B cell (primary cell): ENCODE measurements at regions of chr17 and their contacts with region 1.

Region 1: GRCh38 chr17:28726226-28727130 is at the start of gene TLCD1:
- DNase-seq: peak; percentile 93
- ATAC-seq: peak; percentile 46
- H3K4me3 ChIP-seq: peak within 1 kb of the TSS; percentile 40 to 77 (median 66)
- H3K4me3 Mint-ChIP-seq: peak within 1 kb of the TSS; percentile 98
- H3K27ac ChIP-seq: peak within 1 kb of the TSS; percentile 90 to 97
- H3K27ac Mint-ChIP-seq: peak within 1 kb of the TSS; percentile 100
- H3K4me1 ChIP-seq: peaks cover 38 to 65% of the 10 kb centered on the region in 2 donors
- H3K4me1 Mint-ChIP-seq: peaks cover 67% of the 10 kb centered on the region
- H3K27me3 ChIP-seq: no peaks in the 10 kb centered on the region
- H3K27me3 Mint-ChIP-seq: no peaks in the 10 kb centered on the region
- CTCF ChIP-seq: peak; percentile 99
- total RNA-seq, gene TLCD1: 3.1 and 3.4 TPM in 2 replicates

Region 2: GRCh38 chr17:28033972-28034714 is 692.3 kb before region 1 on chr17:
- CTCF ChIA-PET with region 1: no interaction called
- POLR2A ChIA-PET with region 1: no interaction called
- intact Hi-C with region 1: no loop called
- DNase-seq: no peak
- ATAC-seq: no peak
- H3K4me3 ChIP-seq: no peak overlapping the region
- H3K4me3 Mint-ChIP-seq: no peak overlapping the region
- H3K27ac ChIP-seq: no peak overlapping the region
- H3K27ac Mint-ChIP-seq: no peak overlapping the region
- H3K4me1 ChIP-seq: no peaks in the 10 kb centered on the region
- H3K4me1 Mint-ChIP-seq: no peaks in the 10 kb centered on the region
- H3K27me3 ChIP-seq: no peaks in the 10 kb centered on the region
- H3K27me3 Mint-ChIP-seq: no peaks in the 10 kb centered on the region
- CTCF ChIP-seq: no peak

Region 3: GRCh38 chr17:28509789-28510188 is 216.7 kb before region 1 on chr17:
- CTCF ChIA-PET with region 1: no interaction called
- POLR2A ChIA-PET with region 1: no interaction called
- intact Hi-C with region 1: no loop called
- DNase-seq: no peak
- ATAC-seq: no peak
- H3K4me3 ChIP-seq: no peak overlapping the region
- H3K4me3 Mint-ChIP-seq: no peak overlapping the region
- H3K27ac ChIP-seq: no peak overlapping the region
- H3K27ac Mint-ChIP-seq: no peak overlapping the region
- H3K4me1 ChIP-seq: no peaks in the 10 kb centered on the region
- H3K4me1 Mint-ChIP-seq: no peaks in the 10 kb centered on the region
- H3K27me3 ChIP-seq: peaks cover 0 to 28% (median 5%) of the 10 kb centered on the region in 4 experiments
- H3K27me3 Mint-ChIP-seq: peaks cover 33% of the 10 kb centered on the region
- CTCF ChIP-seq: no peak

Region 4: GRCh38 chr17:28698253-28698941 is 28.1 kb before region 1 on chr17:
- CTCF ChIA-PET with region 1: no interaction called
- POLR2A ChIA-PET with region 1: no interaction called
- intact Hi-C with region 1: no loop called
- DNase-seq: no peak
- ATAC-seq: no peak
- H3K4me3 ChIP-seq: no peak overlapping the region
- H3K4me3 Mint-ChIP-seq: no peak overlapping the region
- H3K27ac ChIP-seq: no peak overlapping the region
- H3K27ac Mint-ChIP-seq: peak overlapping the region; percentile 23
- H3K4me1 ChIP-seq: no peaks in the 10 kb centered on the region
- H3K4me1 Mint-ChIP-seq: no peaks in the 10 kb centered on the region
- H3K27me3 ChIP-seq: no peaks in the 10 kb centered on the region
- H3K27me3 Mint-ChIP-seq: no peaks in the 10 kb centered on the region
- CTCF ChIP-seq: no peak

Region 5: GRCh38 chr17:28710861-28711722 is 15.4 kb before region 1 on chr17:
- CTCF ChIA-PET with region 1: interaction called, 31 read pairs
- POLR2A ChIA-PET with region 1: interaction called, 38 read pairs
- intact Hi-C with region 1: no loop called
- DNase-seq: peak; percentile 88
- ATAC-seq: peak; percentile 90
- H3K4me3 ChIP-seq: peak overlapping the region; percentile 54 to 88 (median 73)
- H3K4me3 Mint-ChIP-seq: peak overlapping the region; percentile 96
- H3K27ac ChIP-seq: peak overlapping the region; percentile 69 to 79
- H3K27ac Mint-ChIP-seq: peak overlapping the region; percentile 93
- H3K4me1 ChIP-seq: peaks cover 9 to 18% of the 10 kb centered on the region in 2 donors
- H3K4me1 Mint-ChIP-seq: peaks cover 19% of the 10 kb centered on the region
- H3K27me3 ChIP-seq: no peaks in the 10 kb centered on the region
- H3K27me3 Mint-ChIP-seq: no peaks in the 10 kb centered on the region
- CTCF ChIP-seq: no peak

Region 6: DNA sequence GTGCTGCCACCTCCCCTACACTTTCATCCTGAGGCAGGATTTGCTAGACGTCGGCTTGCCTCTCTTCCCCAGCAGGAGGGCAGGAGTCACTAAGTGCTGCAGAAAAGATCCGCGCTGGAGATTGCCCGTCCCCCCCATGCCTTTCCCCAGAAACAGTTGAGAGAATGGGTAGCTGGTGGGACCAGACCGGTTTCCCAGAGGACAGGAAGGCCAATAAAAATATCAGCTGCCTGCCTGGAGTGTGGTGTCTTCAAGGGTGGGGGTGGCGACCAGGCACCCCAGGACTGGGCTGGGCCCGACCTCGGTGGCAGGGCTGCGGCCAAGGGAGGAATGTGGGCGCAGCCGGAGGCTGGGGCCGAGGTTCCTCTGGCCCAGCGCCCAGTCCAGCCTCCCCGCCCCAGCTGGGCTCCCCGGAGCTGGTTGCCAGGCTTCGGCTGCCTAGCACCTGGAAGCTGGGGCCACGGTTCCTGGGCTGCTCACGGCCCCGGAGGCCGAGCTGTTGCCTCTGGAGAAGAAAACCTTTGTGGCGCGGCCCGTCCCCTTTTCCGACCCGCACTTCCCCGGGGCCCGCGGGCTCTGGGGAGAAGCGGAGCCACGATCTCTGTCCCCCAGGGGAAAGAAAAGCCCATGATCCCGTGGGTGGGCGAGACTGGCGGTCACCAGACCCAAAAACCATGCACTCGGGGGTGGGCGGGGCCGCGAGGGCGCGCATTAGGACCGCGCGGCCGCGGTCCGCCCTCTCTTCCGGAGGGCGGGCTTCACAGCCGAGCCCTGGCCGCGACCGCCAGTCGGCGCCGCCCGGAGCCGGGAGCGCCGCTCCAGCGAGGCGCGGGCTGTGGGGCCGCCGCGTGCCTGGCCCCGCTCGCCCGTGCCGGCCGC is 17.0 kb after region 1 on chr17 and contains the start of gene TRAF4:
- CTCF ChIA-PET with region 1: interaction called, 1,020 read pairs
- POLR2A ChIA-PET with region 1: interaction called, 511 read pairs
- intact Hi-C with region 1: loop called (anchors 1 kb)
- DNase-seq: peak; percentile 94
- ATAC-seq: peak; percentile 72
- H3K4me3 ChIP-seq: peak within 1 kb of the TSS; percentile 58 to 98 (median 88)
- H3K4me3 Mint-ChIP-seq: peak within 1 kb of the TSS; percentile 94
- H3K27ac ChIP-seq: peak within 1 kb of the TSS; percentile 86 to 100
- H3K27ac Mint-ChIP-seq: peak within 1 kb of the TSS; percentile 94
- H3K4me1 ChIP-seq: peaks cover 76 to 79% of the 10 kb centered on the region in 2 donors
- H3K4me1 Mint-ChIP-seq: peaks cover 63% of the 10 kb centered on the region
- H3K27me3 ChIP-seq: no peaks in the 10 kb centered on the region
- H3K27me3 Mint-ChIP-seq: no peaks in the 10 kb centered on the region
- CTCF ChIP-seq: no peak
- total RNA-seq, gene TRAF4: 226 and 235 TPM in 2 replicates

Region 7: DNA sequence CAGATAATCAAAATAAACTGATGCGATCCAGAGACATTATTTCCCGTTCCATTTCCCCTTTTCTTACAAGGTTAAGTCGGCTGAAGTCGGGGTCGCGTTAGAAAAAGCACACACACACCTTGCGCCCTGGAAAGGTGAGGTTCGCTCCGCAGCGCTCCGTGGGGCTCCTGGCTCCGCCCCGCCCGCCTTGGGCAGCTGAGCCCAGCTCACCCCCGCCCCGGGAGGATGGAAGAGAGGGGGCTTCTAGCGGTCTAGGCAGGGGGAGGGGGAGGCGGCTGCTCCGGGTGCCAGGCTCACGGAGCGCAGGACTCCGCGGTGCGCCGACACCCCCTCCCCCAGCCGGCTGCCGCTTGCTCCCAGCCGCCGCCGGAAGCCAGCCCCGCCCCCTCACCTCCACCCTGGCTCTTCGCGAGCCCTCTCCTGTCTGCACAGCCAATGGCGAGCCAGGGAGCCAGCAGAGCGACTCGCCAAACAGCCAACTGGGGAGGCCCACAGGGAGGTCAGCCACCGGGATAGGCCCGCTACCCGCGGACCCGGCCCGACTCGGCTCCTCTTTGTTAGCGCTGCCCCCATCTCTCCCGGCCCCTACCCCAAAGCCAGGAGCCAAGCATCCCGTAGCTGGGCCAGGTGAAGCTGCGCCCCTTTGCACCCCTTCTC is 85.7 kb after region 1 on chr17:
- CTCF ChIA-PET with region 1: interaction called, 13 read pairs
- POLR2A ChIA-PET with region 1: interaction called, 3 read pairs
- intact Hi-C with region 1: loop called (anchors 2 kb)
- DNase-seq: peak; percentile 95
- ATAC-seq: peak; percentile 99
- H3K4me3 ChIP-seq: peak overlapping the region; percentile 48 to 92 (median 77)
- H3K4me3 Mint-ChIP-seq: peak overlapping the region; percentile 92
- H3K27ac ChIP-seq: peak overlapping the region; percentile 87
- H3K27ac Mint-ChIP-seq: peak overlapping the region; percentile 92
- H3K4me1 ChIP-seq: peaks cover 12 to 16% of the 10 kb centered on the region in 2 donors
- H3K4me1 Mint-ChIP-seq: peaks cover 34% of the 10 kb centered on the region
- H3K27me3 ChIP-seq: no peaks in the 10 kb centered on the region
- H3K27me3 Mint-ChIP-seq: no peaks in the 10 kb centered on the region
- CTCF ChIP-seq: no peak

Region 8: GRCh38 chr17:28896884-28897768 is 170.6 kb after region 1 on chr17 and contains the start of gene FLOT2:
- CTCF ChIA-PET with region 1: interaction called, 31 read pairs
- POLR2A ChIA-PET with region 1: interaction called, 17 read pairs
- intact Hi-C with region 1: loop called (anchors 1 kb)
- DNase-seq: peak; percentile 76
- ATAC-seq: peak; percentile 60
- H3K4me3 ChIP-seq: peak within 1 kb of the TSS; percentile 71 to 95 (median 82)
- H3K4me3 Mint-ChIP-seq: peak within 1 kb of the TSS; percentile 97
- H3K27ac ChIP-seq: peak within 1 kb of the TSS; percentile 82 to 97
- H3K27ac Mint-ChIP-seq: peak within 1 kb of the TSS; percentile 99
- H3K4me1 ChIP-seq: peaks cover 62 to 73% of the 10 kb centered on the region in 2 donors
- H3K4me1 Mint-ChIP-seq: peaks cover 68% of the 10 kb centered on the region
- H3K27me3 ChIP-seq: no peaks in the 10 kb centered on the region
- H3K27me3 Mint-ChIP-seq: no peaks in the 10 kb centered on the region
- CTCF ChIP-seq: peak; percentile 57
- total RNA-seq, gene FLOT2: 251 and 270 TPM in 2 replicates

Region 9: DNA sequence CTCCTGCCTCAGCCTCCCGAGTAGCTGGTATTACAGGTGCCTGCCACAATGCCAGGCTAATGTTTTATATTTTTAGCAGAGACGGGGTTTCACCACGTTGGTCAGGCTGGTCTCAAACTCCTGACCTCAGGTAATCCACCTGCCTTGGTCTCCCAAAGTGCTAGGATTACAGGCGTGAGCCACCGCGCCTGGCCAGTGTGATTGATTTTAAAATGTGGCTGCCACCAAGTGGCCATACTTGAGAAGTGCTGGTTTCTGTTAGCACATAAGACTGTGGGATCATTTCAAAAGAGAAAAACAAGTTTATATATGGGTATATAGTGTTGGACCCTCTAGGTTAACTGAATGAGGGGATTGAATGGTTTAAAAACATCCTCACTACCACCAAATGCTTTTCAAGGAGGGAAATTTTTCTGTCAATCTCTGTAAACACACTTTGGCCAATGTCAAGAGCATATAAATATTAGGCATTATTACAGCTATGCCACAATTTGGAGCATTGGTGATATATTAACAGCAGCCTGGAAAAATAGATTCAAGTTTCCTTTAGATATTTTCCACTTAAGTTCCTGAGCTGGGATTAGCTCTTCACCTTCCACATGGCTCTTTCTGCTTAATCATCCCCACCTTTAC is 189.9 kb after region 1 on chr17:
- CTCF ChIA-PET with region 1: interaction called, 30 read pairs
- POLR2A ChIA-PET with region 1: interaction called, 15 read pairs
- intact Hi-C with region 1: loop called (anchors 1 kb)
- DNase-seq: peak; percentile 60
- ATAC-seq: peak; percentile 80
- H3K4me3 ChIP-seq: no peak overlapping the region
- H3K4me3 Mint-ChIP-seq: no peak overlapping the region
- H3K27ac ChIP-seq: no peak overlapping the region
- H3K27ac Mint-ChIP-seq: no peak overlapping the region
- H3K4me1 ChIP-seq: no peaks in the 10 kb centered on the region
- H3K4me1 Mint-ChIP-seq: no peaks in the 10 kb centered on the region
- H3K27me3 ChIP-seq: no peaks in the 10 kb centered on the region
- H3K27me3 Mint-ChIP-seq: no peaks in the 10 kb centered on the region
- CTCF ChIP-seq: peak; percentile 82